ENCODE measurements at regions of chr14 and their contacts with region 1.

Region 1: DNA sequence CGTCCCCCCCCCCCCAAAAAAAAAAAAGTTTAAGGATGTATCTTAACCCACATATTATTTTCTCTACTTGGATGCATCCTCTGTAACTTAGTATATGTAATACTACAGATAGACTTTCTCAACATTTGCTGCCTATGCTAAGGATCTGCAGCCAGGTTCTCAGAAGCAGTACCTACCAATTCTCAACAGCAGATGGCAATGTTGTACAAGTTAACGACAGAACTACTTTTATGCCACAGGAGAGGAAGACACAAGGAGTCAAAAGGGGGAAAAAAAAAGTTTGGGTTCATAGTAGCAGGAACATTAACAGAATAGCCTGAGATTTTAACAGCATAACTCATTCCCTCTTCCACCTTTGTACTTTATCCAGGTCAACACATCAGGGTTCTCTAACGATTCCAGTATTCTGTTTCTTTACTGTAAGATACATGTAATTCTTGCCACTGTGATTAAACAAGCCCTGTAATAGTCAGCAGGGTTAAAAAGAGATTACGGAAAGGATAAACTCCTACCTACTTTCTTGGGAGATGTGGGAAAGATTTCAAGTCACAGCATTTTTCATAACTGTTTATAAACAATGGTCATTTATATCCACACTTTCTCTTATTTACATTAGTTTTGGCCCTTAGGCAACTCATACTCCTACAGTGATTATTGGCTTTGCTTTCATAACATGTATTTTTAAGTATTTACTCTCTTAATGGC is 5.7 kb upstream of the NEK9 start:
- DNase-seq: peak; percentile 69
- ATAC-seq: peak; percentile 77
- H3K4me3 ChIP-seq: no peak overlapping the region
- H3K27ac ChIP-seq: no peak overlapping the region
- H3K4me1 ChIP-seq: peaks cover 13% of the 10 kb centered on the region
- H3K27me3 ChIP-seq: no peaks in the 10 kb centered on the region
- CTCF ChIP-seq: peak; percentile 83
- EP300 ChIP-seq: no peak
- POLR2A ChIP-seq: no peak
- RAD21 ChIP-seq: peak; percentile 62; the same call in 1 of the 2 replicates

Region 2: DNA sequence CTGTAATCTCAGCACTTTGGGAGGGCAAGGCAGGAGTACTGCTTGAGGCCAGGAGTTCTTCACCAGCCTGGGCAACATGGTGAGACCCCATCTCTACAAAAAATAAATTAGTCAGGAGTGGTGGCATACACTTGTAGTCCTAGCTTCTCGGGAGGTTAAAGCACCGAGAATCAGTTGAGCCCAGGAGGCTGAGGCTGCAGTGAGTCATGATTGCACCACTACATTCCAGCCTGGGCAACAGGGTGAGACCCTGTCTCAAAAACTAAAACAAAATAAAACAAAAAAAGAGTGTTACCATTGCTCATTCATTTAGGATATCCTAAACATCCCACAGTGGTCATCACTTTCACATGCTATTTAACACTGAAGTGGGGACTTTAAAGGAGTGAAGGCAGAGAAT is 13.5 kb before region 1 on chr14:
- CTCF ChIA-PET with region 1: no interaction called
- POLR2A ChIA-PET with region 1: no interaction called
- in situ Hi-C with region 1: no loop called
- intact Hi-C with region 1: no loop called
- DNase-seq: no peak
- ATAC-seq: no peak
- H3K4me3 ChIP-seq: no peak overlapping the region
- H3K27ac ChIP-seq: no peak overlapping the region
- H3K4me1 ChIP-seq: no peaks in the 10 kb centered on the region
- H3K27me3 ChIP-seq: no peaks in the 10 kb centered on the region
- CTCF ChIP-seq: no peak
- EP300 ChIP-seq: no peak
- POLR2A ChIP-seq: no peak
- RAD21 ChIP-seq: no peak

Region 3: GRCh38 chr14:75147423-75148071 is 15.0 kb after region 1 on chr14:
- CTCF ChIA-PET with region 1: no interaction called
- POLR2A ChIA-PET with region 1: no interaction called
- in situ Hi-C with region 1: no loop called
- intact Hi-C with region 1: loop called (anchors 1 kb)
- DNase-seq: peak; percentile 97
- ATAC-seq: peak; percentile 98
- H3K4me3 ChIP-seq: peak overlapping the region in 1 of 3 experiments; percentile 3; a peak in 1 of 6 replicates
- H3K27ac ChIP-seq: peak overlapping the region; percentile 75
- H3K4me1 ChIP-seq: peaks cover 75% of the 10 kb centered on the region
- H3K27me3 ChIP-seq: no peaks in the 10 kb centered on the region
- CTCF ChIP-seq: peak; percentile 76
- EP300 ChIP-seq: 0 out of 4 replicates have a peak, but pooled peaks of 1 of the 2 experiments have one; percentile 39
- POLR2A ChIP-seq: peak in 1 of 2 experiments; percentile 42; a peak in 1 of 4 replicates
- RAD21 ChIP-seq: no peak

Region 4: GRCh38 chr14:75176142-75176820 is 43.7 kb after region 1 on chr14 and contains the start of gene TMED10:
- CTCF ChIA-PET with region 1: no interaction called
- POLR2A ChIA-PET with region 1: no interaction called
- in situ Hi-C with region 1: no loop called
- intact Hi-C with region 1: loop called (anchors 5 kb)
- DNase-seq: peak; percentile 81
- ATAC-seq: peak; percentile 86
- H3K4me3 ChIP-seq: peak within 1 kb of the TSS; percentile 83 to 98 (median 93)
- H3K27ac ChIP-seq: peak within 1 kb of the TSS; percentile 99
- H3K4me1 ChIP-seq: peaks cover 38% of the 10 kb centered on the region
- H3K27me3 ChIP-seq: no peaks in the 10 kb centered on the region; a peak in 1 of 5 replicates
- CTCF ChIP-seq: peak; percentile 57
- EP300 ChIP-seq: no peak
- POLR2A ChIP-seq: peak; percentile 83 to 87
- RAD21 ChIP-seq: peak; percentile 42; the same call in 1 of the 2 replicates
- total RNA-seq, gene TMED10: 183 and 311 TPM in 2 replicates

Region 5: GRCh38 chr14:75307700-75308379 is 175.3 kb after region 1 on chr14:
- CTCF ChIA-PET with region 1: interaction called, 40 read pairs
- POLR2A ChIA-PET with region 1: no interaction called
- in situ Hi-C with region 1: no loop called
- intact Hi-C with region 1: loop called (anchors 1 kb)
- DNase-seq: peak; percentile 63
- ATAC-seq: peak; percentile 91
- H3K4me3 ChIP-seq: no peak overlapping the region
- H3K27ac ChIP-seq: no peak overlapping the region
- H3K4me1 ChIP-seq: peaks cover 12% of the 10 kb centered on the region
- H3K27me3 ChIP-seq: peaks cover 0 to 4% of the 10 kb centered on the region in 2 experiments; a peak in 1 of 5 replicates
- CTCF ChIP-seq: peak; percentile 93
- EP300 ChIP-seq: no peak
- POLR2A ChIP-seq: no peak
- RAD21 ChIP-seq: peak; percentile 81